Common myeloid progenitor, CD34-positive (primary cell): ENCODE measurements at regions of chr11 and their contacts with region 1.

Region 1: GRCh38 chr11:72024069-72024754 is 25.5 kb downstream of the IL18BP start:
- DNase-seq: no peak
- H3K4me3 ChIP-seq: no peak overlapping the region
- H3K27ac ChIP-seq: no peak overlapping the region
- H3K4me1 ChIP-seq: no peaks in the 10 kb centered on the region
- H3K27me3 ChIP-seq: no peaks in the 10 kb centered on the region

Region 2: GRCh38 chr11:72069787-72070251 is 45.6 kb after region 1 on chr11:
- CTCF ChIA-PET with region 1: interaction called, 23 read pairs
- POLR2A ChIA-PET with region 1: interaction called, 3 read pairs
- DNase-seq: peak in 2 of 3 donors; percentile 23 to 24
- H3K4me3 ChIP-seq: peak overlapping the region in 1 of 7 experiments; percentile 32
- H3K27ac ChIP-seq: peak overlapping the region in 1 of 2 experiments; percentile 51
- H3K4me1 ChIP-seq: peaks cover 0 to 35% (median 9%) of the 10 kb centered on the region in 4 experiments
- H3K27me3 ChIP-seq: no peaks in the 10 kb centered on the region

Region 3: DNA sequence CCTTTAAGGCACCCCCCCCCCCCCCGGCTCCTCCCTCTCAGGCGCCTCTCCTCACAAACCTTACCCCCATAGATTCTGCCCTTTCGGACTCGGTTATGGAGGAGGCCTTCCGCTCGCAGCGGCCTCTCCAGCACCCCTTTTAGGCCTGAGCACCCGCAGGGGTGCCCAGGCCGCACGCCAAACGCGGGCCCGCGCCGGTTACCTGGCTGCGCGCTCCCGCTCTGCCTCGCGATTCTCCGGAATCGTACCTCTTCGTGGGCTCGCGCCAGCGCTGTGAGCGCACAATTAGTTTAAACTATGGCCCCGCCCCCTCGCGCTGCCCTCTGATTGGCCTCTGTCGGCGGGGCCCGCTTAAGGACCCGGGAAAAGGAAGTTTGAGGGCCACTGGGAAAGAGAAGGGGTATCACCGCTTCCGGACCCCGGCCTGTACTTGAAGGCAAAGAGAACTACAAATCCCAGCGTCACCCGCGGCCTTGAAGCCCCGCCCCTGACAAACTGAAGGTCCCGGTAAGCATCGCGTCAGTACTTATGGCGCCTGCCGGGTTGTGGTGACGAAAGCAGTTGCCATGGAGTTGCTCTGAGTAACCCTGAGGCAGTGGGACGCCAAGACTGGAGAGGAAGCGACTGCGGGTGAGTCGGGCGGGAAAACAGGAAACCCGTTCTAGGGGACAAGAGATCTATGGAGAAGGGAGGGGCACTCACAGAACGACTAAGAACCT is 56.2 kb after region 1 on chr11 and contains the starts of genes LRRC51 and NUMA1:
- CTCF ChIA-PET with region 1: interaction called, 57 read pairs
- POLR2A ChIA-PET with region 1: interaction called, 3 read pairs
- DNase-seq: peak; percentile 100
- H3K4me3 ChIP-seq: peak within 1 kb of the TSS; percentile 77 to 93 (median 85)
- H3K27ac ChIP-seq: peak within 1 kb of the TSS; percentile 74 to 90
- H3K4me1 ChIP-seq: peaks cover 10 to 47% (median 33%) of the 10 kb centered on the region in 4 experiments
- H3K27me3 ChIP-seq: no peaks in the 10 kb centered on the region